ENCODE measurements at regions of chr5 and their contacts with region 1.

Region 1: DNA sequence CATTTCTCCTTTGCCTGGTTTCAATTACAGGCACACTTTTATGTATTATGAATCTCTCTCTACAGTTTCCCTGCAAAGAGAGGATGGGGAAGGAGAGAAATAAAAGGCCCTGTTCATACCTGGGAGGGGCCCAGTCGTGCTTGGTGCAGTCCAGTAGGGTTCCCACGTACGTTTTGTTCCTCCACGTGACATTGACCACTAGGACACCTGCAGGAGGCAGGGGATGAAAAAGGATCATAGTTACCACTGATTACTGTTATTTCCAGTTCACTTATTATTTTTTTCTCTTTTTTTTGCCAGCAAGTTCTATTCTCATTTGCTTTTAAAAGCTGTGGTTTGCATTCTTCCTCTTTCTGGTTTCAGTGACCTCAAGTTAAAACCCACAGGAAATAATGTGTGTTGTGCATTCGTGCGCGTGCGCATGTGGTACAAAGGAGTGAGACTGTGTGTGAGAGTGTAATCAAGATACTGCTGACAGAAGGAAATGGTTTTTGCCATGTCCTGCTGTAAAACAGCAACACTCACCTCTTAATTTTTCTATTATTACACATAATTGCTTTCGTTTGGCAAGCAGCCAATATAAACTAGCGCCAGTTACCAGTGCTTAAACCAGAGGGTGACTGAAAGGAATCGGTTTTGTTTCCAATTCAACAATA is 96.8 kb downstream of the ZNF608 start:
- DNase-seq: peak; percentile 99
- ATAC-seq: peak; percentile 85
- H3K4me3 ChIP-seq: peak overlapping the region; percentile 17; the same call in 1 of the 2 replicates
- H3K27ac ChIP-seq: peak overlapping the region; percentile 68
- H3K4me1 ChIP-seq: peaks cover 49% of the 10 kb centered on the region
- H3K27me3 ChIP-seq: no peaks in the 10 kb centered on the region
- CTCF ChIP-seq: 0 out of 6 replicates have a peak, but pooled peaks of 1 of the 3 experiments have one; percentile 3
- EP300 ChIP-seq: peak; percentile 96 to 98
- POLR2A ChIP-seq: no peak
- RAD21 ChIP-seq: peak; percentile 28; the same call in 1 of the 2 replicates

Region 2: DNA sequence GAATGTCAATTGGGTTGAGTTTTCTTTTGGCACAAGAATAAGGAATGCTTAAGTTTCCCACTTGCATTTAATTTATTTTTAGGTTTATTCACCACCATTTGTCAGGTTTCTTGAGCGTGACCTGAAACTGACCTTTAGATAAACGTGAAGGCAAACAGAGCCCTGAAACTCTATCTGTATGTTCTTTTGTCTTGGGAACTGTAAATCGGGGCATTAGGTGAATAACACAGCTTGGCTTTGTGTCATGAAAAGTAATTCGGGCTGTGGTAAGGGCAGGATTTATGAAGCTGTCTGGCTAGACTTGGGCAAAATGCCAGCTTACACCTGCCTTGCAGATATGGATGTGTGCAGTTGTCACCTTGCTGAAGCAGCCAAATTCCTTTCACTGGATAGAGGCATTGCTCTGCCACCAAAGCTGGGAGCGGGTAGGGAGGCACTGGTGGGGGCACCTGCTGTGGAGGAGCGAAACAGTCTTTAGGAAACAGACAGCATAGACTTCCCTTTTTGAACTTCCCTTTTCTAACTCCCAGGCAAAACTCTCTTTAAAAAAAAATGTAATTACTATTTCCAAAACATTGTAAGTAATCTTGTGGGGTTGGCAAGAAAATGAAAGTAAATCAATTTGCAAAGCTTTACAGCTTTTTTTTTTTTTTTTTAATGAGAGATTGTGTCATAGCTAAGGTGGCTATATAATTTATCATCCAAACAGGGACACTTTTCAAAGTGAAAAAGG is 592.5 kb before region 1 on chr5:
- CTCF ChIA-PET with region 1: no interaction called
- POLR2A ChIA-PET with region 1: no interaction called
- RAD21 ChIA-PET with region 1: no interaction called
- SMC1A ChIA-PET with region 1: interaction called, 3 read pairs
- in situ Hi-C with region 1: no loop called
- intact Hi-C with region 1: loop called (anchors 10 kb)
- DNase-seq: peak; percentile 47
- ATAC-seq: peak; percentile 76
- H3K4me3 ChIP-seq: peak overlapping the region; percentile 65; the same call in 1 of the 2 replicates
- H3K27ac ChIP-seq: peak overlapping the region; percentile 46
- H3K4me1 ChIP-seq: peaks cover 37% of the 10 kb centered on the region
- H3K27me3 ChIP-seq: no peaks in the 10 kb centered on the region
- CTCF ChIP-seq: no peak
- EP300 ChIP-seq: 0 out of 4 replicates have a peak, but pooled peaks of 1 of the 2 experiments have one; percentile 5
- POLR2A ChIP-seq: no peak
- RAD21 ChIP-seq: no peak

Region 3: GRCh38 chr5:124419531-124419930 is 230.1 kb before region 1 on chr5:
- CTCF ChIA-PET with region 1: no interaction called
- POLR2A ChIA-PET with region 1: no interaction called
- RAD21 ChIA-PET with region 1: no interaction called
- SMC1A ChIA-PET with region 1: no interaction called
- in situ Hi-C with region 1: no loop called
- intact Hi-C with region 1: no loop called
- DNase-seq: no peak
- ATAC-seq: no peak
- H3K4me3 ChIP-seq: no peak overlapping the region
- H3K27ac ChIP-seq: no peak overlapping the region
- H3K4me1 ChIP-seq: no peaks in the 10 kb centered on the region
- H3K27me3 ChIP-seq: no peaks in the 10 kb centered on the region; a peak in 1 of 4 replicates
- CTCF ChIP-seq: no peak
- EP300 ChIP-seq: peak in 1 of 2 experiments; percentile 30; a peak in 1 of 4 replicates
- POLR2A ChIP-seq: no peak
- RAD21 ChIP-seq: no peak

Region 4: DNA sequence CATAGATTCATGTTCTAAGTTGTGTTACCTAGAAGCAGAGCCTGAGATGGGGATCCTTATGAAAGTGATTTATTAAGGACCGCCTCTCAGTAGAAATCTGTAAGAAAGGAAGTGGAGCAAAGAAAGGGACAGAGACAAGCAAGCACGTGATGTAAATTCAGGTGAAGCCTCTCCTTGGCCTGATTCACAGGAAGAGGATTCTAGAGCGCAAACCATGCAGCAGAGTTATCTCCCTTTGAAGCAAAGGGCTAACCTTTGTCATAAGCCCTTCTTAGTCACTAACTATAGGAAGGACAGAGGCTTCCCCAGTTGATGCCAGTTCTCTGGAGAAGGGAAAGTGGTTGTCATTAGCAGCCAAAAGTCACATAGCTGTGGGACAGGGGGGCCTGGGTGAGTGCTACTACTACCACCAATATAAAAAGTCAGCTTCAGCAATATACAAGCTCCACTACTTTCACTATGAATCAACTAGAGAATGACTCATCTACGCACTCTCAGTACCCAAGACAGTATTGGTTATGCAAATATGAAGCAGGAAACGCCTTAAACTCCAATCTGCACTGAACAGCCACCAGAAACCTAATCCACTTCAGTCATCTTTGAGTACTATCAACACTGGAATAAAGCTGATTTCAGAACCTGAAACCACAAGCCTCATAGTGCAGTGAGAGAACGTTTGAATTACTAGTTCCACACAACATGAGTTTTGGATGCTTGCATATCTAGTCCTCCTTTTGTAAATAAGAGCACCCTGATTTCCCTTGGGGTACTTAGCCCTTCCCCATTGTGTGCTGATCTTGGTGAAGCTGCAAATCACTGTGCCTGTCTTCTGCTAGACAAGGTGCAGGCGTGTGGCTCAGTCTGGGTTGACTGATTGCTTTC is 65.9 kb before region 1 on chr5:
- CTCF ChIA-PET with region 1: no interaction called
- POLR2A ChIA-PET with region 1: no interaction called
- RAD21 ChIA-PET with region 1: interaction called, 10 read pairs
- SMC1A ChIA-PET with region 1: interaction called, 4 read pairs
- in situ Hi-C with region 1: loop called (anchors 5 kb)
- intact Hi-C with region 1: loop called (anchors 1 kb)
- DNase-seq: peak; percentile 89
- ATAC-seq: peak; percentile 99
- H3K4me3 ChIP-seq: no peak overlapping the region
- H3K27ac ChIP-seq: peak overlapping the region; percentile 42
- H3K4me1 ChIP-seq: peaks cover 14% of the 10 kb centered on the region; the same call in 1 of the 2 replicates
- H3K27me3 ChIP-seq: peaks cover 0 to 8% of the 10 kb centered on the region in 2 experiments
- CTCF ChIP-seq: no peak
- EP300 ChIP-seq: peak; percentile 59 to 95; a peak in 3 of 4 replicates
- POLR2A ChIP-seq: no peak
- RAD21 ChIP-seq: no peak

Region 5: GRCh38 chr5:124741711-124742496 is 92.3 kb after region 1 on chr5:
- CTCF ChIA-PET with region 1: no interaction called
- POLR2A ChIA-PET with region 1: interaction called, 4 read pairs
- RAD21 ChIA-PET with region 1: interaction called, 49 read pairs
- SMC1A ChIA-PET with region 1: interaction called, 44 read pairs
- in situ Hi-C with region 1: no loop called
- intact Hi-C with region 1: loop called (anchors 2 kb)
- DNase-seq: no peak
- ATAC-seq: no peak
- H3K4me3 ChIP-seq: peak overlapping the region; percentile 71
- H3K27ac ChIP-seq: peak overlapping the region; percentile 67
- H3K4me1 ChIP-seq: peaks cover 3% of the 10 kb centered on the region
- H3K27me3 ChIP-seq: 0 out of 4 replicates have a peak, but pooled peaks cover 0 to 4% of the 10 kb centered on the region in 2 experiments
- CTCF ChIP-seq: no peak
- EP300 ChIP-seq: no peak
- POLR2A ChIP-seq: no peak
- RAD21 ChIP-seq: no peak

Region 6: GRCh38 chr5:124908581-124909451 is 259.2 kb after region 1 on chr5:
- CTCF ChIA-PET with region 1: no interaction called
- POLR2A ChIA-PET with region 1: no interaction called
- RAD21 ChIA-PET with region 1: interaction called, 16 read pairs
- SMC1A ChIA-PET with region 1: interaction called, 7 read pairs
- in situ Hi-C with region 1: loop called (anchors 5 kb)
- intact Hi-C with region 1: no loop called
- DNase-seq: peak; percentile 75
- ATAC-seq: peak; percentile 88
- H3K4me3 ChIP-seq: no peak overlapping the region
- H3K27ac ChIP-seq: peak overlapping the region; percentile 51
- H3K4me1 ChIP-seq: peaks cover 41% of the 10 kb centered on the region
- H3K27me3 ChIP-seq: no peaks in the 10 kb centered on the region
- CTCF ChIP-seq: no peak
- EP300 ChIP-seq: peak; percentile 96 to 98
- POLR2A ChIP-seq: no peak
- RAD21 ChIP-seq: peak; percentile 20; the same call in 1 of the 2 replicates

Region 7: GRCh38 chr5:125006011-125006685 is 356.5 kb after region 1 on chr5:
- CTCF ChIA-PET with region 1: no interaction called
- POLR2A ChIA-PET with region 1: no interaction called
- RAD21 ChIA-PET with region 1: no interaction called
- SMC1A ChIA-PET with region 1: no interaction called
- in situ Hi-C with region 1: no loop called
- intact Hi-C with region 1: loop called (anchors 5 kb)
- DNase-seq: peak; percentile 71
- ATAC-seq: peak; percentile 82
- H3K4me3 ChIP-seq: 0 out of 2 replicates have a peak overlapping the region, but pooled peaks have one; percentile 0
- H3K27ac ChIP-seq: peak overlapping the region; percentile 69
- H3K4me1 ChIP-seq: peaks cover 18% of the 10 kb centered on the region
- H3K27me3 ChIP-seq: no peaks in the 10 kb centered on the region
- CTCF ChIP-seq: no peak
- EP300 ChIP-seq: peak; percentile 92 to 95
- POLR2A ChIP-seq: no peak
- RAD21 ChIP-seq: peak; percentile 36

Region 8: GRCh38 chr5:125311743-125312142 is 662.1 kb after region 1 on chr5:
- CTCF ChIA-PET with region 1: no interaction called
- POLR2A ChIA-PET with region 1: no interaction called
- RAD21 ChIA-PET with region 1: no interaction called
- SMC1A ChIA-PET with region 1: no interaction called
- in situ Hi-C with region 1: no loop called
- intact Hi-C with region 1: no loop called
- DNase-seq: no peak
- ATAC-seq: no peak
- H3K4me3 ChIP-seq: no peak overlapping the region
- H3K27ac ChIP-seq: no peak overlapping the region
- H3K4me1 ChIP-seq: no peaks in the 10 kb centered on the region
- H3K27me3 ChIP-seq: no peaks in the 10 kb centered on the region
- CTCF ChIP-seq: no peak
- EP300 ChIP-seq: no peak
- POLR2A ChIP-seq: no peak
- RAD21 ChIP-seq: no peak

Measured in GM12878 (cell line).